ENCODE measurements at regions of chr22 and their contacts with region 1.

Region 1: GRCh38 chr22:33372875-33373274 is 314.7 kb upstream of the SYN3 start:
- DNase-seq: no peak
- H3K4me3 ChIP-seq: no peak overlapping the region
- H3K27ac ChIP-seq: no peak overlapping the region
- H3K4me1 ChIP-seq: no peaks in the 10 kb centered on the region
- H3K27me3 ChIP-seq: no peaks in the 10 kb centered on the region
- CTCF ChIP-seq: no peak

Region 2: GRCh38 chr22:33315117-33315516 is 57.8 kb before region 1 on chr22:
- CTCF ChIA-PET with region 1: no interaction called
- POLR2A ChIA-PET with region 1: interaction called, 12 read pairs
- intact Hi-C with region 1: no loop called
- DNase-seq: no peak
- H3K4me3 ChIP-seq: no peak overlapping the region
- H3K27ac ChIP-seq: no peak overlapping the region
- H3K4me1 ChIP-seq: no peaks in the 10 kb centered on the region
- H3K27me3 ChIP-seq: peaks cover 30% of the 10 kb centered on the region; the same call in 1 of the 2 replicates
- CTCF ChIP-seq: no peak

Measured in PC-9 (cell line).